ENCODE measurements at regions of chr12 and their contacts with region 1.

Region 1: DNA sequence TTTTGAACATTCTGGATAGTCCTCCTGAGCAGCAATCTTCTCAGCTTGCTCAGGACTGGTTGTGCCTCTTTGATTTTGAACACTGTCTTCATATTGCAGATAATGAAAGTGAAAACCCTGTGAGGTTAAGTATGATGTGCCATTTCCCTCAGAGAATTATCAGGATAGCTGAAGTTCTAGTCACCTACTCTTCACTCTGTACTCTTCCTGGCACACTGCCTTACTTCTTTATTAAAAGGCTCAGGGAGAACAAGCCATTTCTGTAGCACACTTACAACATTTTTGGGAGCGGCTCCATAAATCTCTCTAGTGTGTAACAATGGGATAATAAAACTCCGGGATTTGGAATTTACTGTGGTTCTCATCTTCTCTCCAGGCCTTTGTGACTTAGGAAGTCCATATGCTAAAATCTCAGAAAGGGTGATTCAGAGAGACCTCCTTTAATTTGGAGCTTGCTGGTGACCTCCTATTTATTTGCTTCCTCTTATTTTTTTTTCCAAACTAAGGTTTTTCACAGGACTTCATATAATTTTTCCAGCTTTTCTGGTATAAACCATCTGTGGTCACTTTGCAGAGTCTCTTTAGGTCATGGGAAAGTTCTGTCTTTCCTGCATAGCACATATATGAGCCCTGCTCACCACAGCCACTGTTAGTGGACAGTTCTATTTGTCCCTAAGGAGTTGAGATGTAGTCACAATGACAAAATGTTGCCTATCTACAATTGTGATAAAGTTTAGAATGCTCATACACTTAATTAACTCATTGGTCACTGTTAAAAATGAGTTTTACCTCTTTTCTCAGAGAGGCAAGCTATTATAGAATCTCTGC is 53.5 kb upstream of the LDHB start:
- DNase-seq: no peak
- H3K4me3 ChIP-seq: no peak overlapping the region
- H3K27ac ChIP-seq: no peak overlapping the region
- H3K4me1 ChIP-seq: no peaks in the 10 kb centered on the region
- H3K27me3 ChIP-seq: no peaks in the 10 kb centered on the region
- CTCF ChIP-seq: no peak
- EP300 ChIP-seq: no peak
- POLR2A ChIP-seq: no peak

Region 2: GRCh38 chr12:21657326-21658077 is 53.7 kb before region 1 on chr12 and contains the start of gene LDHB:
- intact Hi-C with region 1: no loop called
- DNase-seq: peak; percentile 93 to 97 (median 95)
- H3K4me3 ChIP-seq: peak within 1 kb of the TSS; percentile 92
- H3K27ac ChIP-seq: peak within 1 kb of the TSS; percentile 75 to 91
- H3K4me1 ChIP-seq: peaks cover 2% of the 10 kb centered on the region
- H3K27me3 ChIP-seq: no peaks in the 10 kb centered on the region
- CTCF ChIP-seq: no peak
- EP300 ChIP-seq: no peak
- POLR2A ChIP-seq: peak; percentile 85
- total RNA-seq, gene LDHB: 266 to 595 (median 479) TPM

Region 3: GRCh38 chr12:21764065-21764464 is 52.9 kb after region 1 on chr12:
- intact Hi-C with region 1: loop called in 1 of 4 experiments (anchors 10 kb)
- DNase-seq: no peak
- H3K4me3 ChIP-seq: no peak overlapping the region
- H3K27ac ChIP-seq: no peak overlapping the region
- H3K4me1 ChIP-seq: no peaks in the 10 kb centered on the region
- H3K27me3 ChIP-seq: no peaks in the 10 kb centered on the region
- CTCF ChIP-seq: no peak
- EP300 ChIP-seq: no peak
- POLR2A ChIP-seq: no peak